Aorta (tissue), 5 donors: ENCODE measurements at regions of chr5 and their contacts with region 1.

Region 1: GRCh38 chr5:15821506-15821905 is 321.5 kb downstream of the FBXL7 start:
- DNase-seq: no peak
- ATAC-seq: no peak
- H3K4me3 ChIP-seq: no peak overlapping the region
- H3K27ac ChIP-seq: no peak overlapping the region
- H3K4me1 ChIP-seq: peaks cover 0 to 5% of the 10 kb centered on the region in 2 donors
- H3K27me3 ChIP-seq: no peaks in the 10 kb centered on the region

Region 2: GRCh38 chr5:15383469-15383868 is 438.0 kb before region 1 on chr5:
- intact Hi-C with region 1: loop called in 1 of 2 experiments (anchors 10 kb)
- DNase-seq: no peak
- ATAC-seq: no peak
- H3K4me3 ChIP-seq: no peak overlapping the region
- H3K27ac ChIP-seq: no peak overlapping the region
- H3K4me1 ChIP-seq: no peaks in the 10 kb centered on the region
- H3K27me3 ChIP-seq: no peaks in the 10 kb centered on the region

Region 3: DNA sequence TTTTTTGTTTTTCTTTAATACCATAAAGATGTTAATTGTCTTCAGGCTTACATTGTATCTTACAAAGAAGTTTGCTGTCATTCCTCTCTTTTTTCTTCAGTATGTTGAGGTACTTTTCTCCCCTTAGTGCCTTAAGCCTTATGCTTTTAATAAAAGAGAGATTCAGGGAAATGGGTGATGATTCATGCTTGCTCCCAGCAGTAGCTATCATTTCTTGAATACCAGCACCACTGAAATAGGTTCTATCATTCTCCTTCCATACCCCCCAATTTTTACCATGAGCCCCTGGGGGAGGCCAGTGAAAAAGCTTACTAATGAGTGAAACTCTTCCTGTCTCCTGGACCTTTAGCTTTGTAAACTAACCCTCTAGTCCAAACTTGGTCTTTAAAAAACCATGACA is 156.5 kb before region 1 on chr5:
- intact Hi-C with region 1: no loop called
- DNase-seq: no peak
- ATAC-seq: no peak
- H3K4me3 ChIP-seq: no peak overlapping the region
- H3K27ac ChIP-seq: no peak overlapping the region
- H3K4me1 ChIP-seq: peaks cover 2 to 4% of the 10 kb centered on the region in 2 donors
- H3K27me3 ChIP-seq: no peaks in the 10 kb centered on the region

Region 4: GRCh38 chr5:15691536-15691935 is 130.0 kb before region 1 on chr5:
- intact Hi-C with region 1: no loop called
- DNase-seq: no peak
- ATAC-seq: no peak
- H3K4me3 ChIP-seq: no peak overlapping the region
- H3K27ac ChIP-seq: no peak overlapping the region
- H3K4me1 ChIP-seq: peaks cover 0 to 20% of the 10 kb centered on the region in 2 donors
- H3K27me3 ChIP-seq: no peaks in the 10 kb centered on the region

Region 5: DNA sequence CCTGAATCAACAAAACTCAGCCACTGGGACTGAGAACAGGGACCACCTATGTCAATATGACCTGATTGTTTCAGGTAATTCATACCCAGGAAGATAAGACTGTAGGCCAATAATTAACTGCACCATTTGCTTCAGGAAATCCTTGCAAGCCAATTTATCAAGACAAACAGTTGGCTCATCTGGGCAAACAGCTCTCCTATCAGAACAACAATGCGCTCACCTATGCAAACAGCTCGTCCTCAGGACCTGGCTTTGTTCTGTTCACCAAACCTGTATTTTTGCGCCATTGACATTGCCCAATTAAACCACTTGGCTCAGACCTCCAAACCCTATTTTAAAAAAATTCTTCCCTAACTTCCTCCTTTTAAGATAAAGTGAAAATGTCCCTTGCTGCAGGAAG is 450.4 kb after region 1 on chr5:
- intact Hi-C with region 1: no loop called
- DNase-seq: no peak
- ATAC-seq: no peak
- H3K4me3 ChIP-seq: no peak overlapping the region
- H3K27ac ChIP-seq: no peak overlapping the region
- H3K4me1 ChIP-seq: no peaks in the 10 kb centered on the region
- H3K27me3 ChIP-seq: no peaks in the 10 kb centered on the region